ENCODE measurements at regions of chr15 and their contacts with region 1.

Region 1: DNA sequence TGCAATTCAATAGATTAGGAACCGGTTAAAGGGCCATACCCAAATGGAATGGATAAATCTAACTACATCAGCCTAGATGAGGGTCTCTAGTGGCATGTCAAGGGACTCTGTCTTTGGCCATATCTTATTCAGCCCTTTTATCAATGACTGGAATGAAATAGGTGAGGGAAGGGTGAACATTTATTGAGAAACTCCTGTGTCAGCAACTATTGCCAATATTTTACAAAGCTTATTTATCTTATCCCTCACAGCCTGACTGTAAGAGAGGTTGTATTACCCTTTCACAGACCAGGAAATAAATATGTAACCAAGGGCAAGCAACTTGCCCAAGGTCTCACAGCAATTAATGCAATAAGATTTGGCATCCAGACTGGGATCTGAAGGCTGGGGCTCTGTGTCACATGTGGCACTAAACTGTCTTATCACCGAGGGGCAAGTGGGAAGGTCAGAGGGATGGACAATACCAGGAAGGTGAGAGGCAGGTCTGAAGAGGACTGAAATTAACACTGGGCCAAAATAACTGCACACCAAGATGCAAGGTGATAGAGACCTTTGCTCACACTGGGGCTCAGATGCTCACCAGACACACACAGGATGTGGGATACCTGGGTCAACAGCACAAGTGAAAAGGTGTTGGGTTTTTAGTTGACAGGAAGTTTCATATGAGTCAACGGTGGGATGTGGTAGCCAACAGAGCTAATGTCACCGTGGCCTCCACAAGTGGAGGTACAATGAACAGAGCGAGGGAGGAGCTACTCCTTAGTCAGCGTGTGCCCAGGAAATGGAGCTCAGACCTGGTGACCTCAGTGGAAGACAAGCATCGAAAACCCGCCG is 261.3 kb downstream of the RPLP1 start:
- DNase-seq: peak in 8 of 9 donors; percentile 60 to 80 (median 70)
- ATAC-seq: peak; percentile 88
- H3K4me3 ChIP-seq: no peak overlapping the region
- H3K4me3 Mint-ChIP-seq: peak overlapping the region; percentile 52 to 80 (median 72)
- H3K27ac ChIP-seq: no peak overlapping the region
- H3K27ac Mint-ChIP-seq: peak overlapping the region; percentile 71 to 90 (median 78)
- H3K4me1 ChIP-seq: peaks cover 32 to 50% of the 10 kb centered on the region in 2 donors
- H3K4me1 Mint-ChIP-seq: peaks cover 31 to 63% (median 54%) of the 10 kb centered on the region in 7 donors
- H3K27me3 ChIP-seq: no peaks in the 10 kb centered on the region
- H3K27me3 Mint-ChIP-seq: peaks cover 0 to 22% (median 0%) of the 10 kb centered on the region in 5 donors

Region 2: DNA sequence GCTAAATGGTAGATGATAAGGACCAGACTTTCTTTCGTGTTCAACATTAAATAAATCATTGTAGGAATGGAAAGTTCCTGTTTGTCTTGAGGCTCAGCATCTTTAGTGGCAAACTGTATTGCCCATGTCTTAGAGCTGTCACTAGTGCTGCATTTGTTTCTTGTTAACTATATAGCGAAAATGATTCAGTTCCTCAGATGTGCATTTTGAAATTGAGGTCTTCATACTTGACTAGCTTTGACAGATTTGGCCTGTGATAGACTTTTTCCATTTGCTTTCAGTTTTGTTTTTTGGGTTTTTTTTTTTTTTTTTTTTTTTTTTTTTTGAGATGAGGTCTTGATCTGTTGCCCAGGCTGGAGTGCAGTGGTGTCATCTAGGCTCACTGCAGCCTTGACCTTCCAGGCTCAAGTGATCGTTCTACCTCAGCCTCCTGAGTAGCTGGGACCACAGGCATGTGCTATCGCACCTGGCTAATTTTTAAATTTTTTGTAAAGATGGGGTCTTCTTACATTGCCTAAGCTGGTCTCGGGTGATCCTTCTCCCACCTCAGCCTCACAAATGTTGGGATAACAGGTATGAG is 270.8 kb before region 1 on chr15:
- CTCF ChIA-PET with region 1: no interaction called
- POLR2A ChIA-PET with region 1: no interaction called
- intact Hi-C with region 1: no loop called
- DNase-seq: no peak
- ATAC-seq: peak; percentile 20
- H3K4me3 ChIP-seq: no peak overlapping the region
- H3K4me3 Mint-ChIP-seq: peak overlapping the region in 1 of 10 donors; percentile 71
- H3K27ac ChIP-seq: no peak overlapping the region
- H3K27ac Mint-ChIP-seq: peak overlapping the region in 2 of 9 donors; percentile 43 to 82
- H3K4me1 ChIP-seq: no peaks in the 10 kb centered on the region
- H3K4me1 Mint-ChIP-seq: peaks cover 0 to 19% (median 0%) of the 10 kb centered on the region in 7 donors
- H3K27me3 ChIP-seq: no peaks in the 10 kb centered on the region
- H3K27me3 Mint-ChIP-seq: no peaks in the 10 kb centered on the region

Region 3: GRCh38 chr15:69668963-69669362 is 45.0 kb before region 1 on chr15:
- CTCF ChIA-PET with region 1: no interaction called
- POLR2A ChIA-PET with region 1: no interaction called
- intact Hi-C with region 1: loop called in 1 of 2 experiments (anchors 2 kb)
- DNase-seq: no peak
- ATAC-seq: peak; percentile 59
- H3K4me3 ChIP-seq: no peak overlapping the region
- H3K4me3 Mint-ChIP-seq: peak overlapping the region in 1 of 10 donors; percentile 48
- H3K27ac ChIP-seq: no peak overlapping the region
- H3K27ac Mint-ChIP-seq: peak overlapping the region in 3 of 9 donors; percentile 40 to 63 (median 59)
- H3K4me1 ChIP-seq: peaks cover 20 to 50% of the 10 kb centered on the region in 2 donors
- H3K4me1 Mint-ChIP-seq: peaks cover 14 to 38% (median 34%) of the 10 kb centered on the region in 7 donors
- H3K27me3 ChIP-seq: no peaks in the 10 kb centered on the region
- H3K27me3 Mint-ChIP-seq: peaks cover 0 to 8% (median 0%) of the 10 kb centered on the region in 5 donors

Region 4: GRCh38 chr15:69679623-69680228 is 34.2 kb before region 1 on chr15:
- CTCF ChIA-PET with region 1: no interaction called
- POLR2A ChIA-PET with region 1: no interaction called
- intact Hi-C with region 1: loop called in 1 of 2 experiments (anchors 5 kb)
- DNase-seq: peak in 1 of 9 donors; percentile 51
- ATAC-seq: peak; percentile 38
- H3K4me3 ChIP-seq: peak overlapping the region; percentile 23
- H3K4me3 Mint-ChIP-seq: peak overlapping the region in 1 of 10 donors; percentile 34
- H3K27ac ChIP-seq: no peak overlapping the region
- H3K27ac Mint-ChIP-seq: no peak overlapping the region
- H3K4me1 ChIP-seq: peaks cover 0 to 11% of the 10 kb centered on the region in 2 donors
- H3K4me1 Mint-ChIP-seq: peaks cover 0 to 24% (median 3%) of the 10 kb centered on the region in 7 donors
- H3K27me3 ChIP-seq: no peaks in the 10 kb centered on the region
- H3K27me3 Mint-ChIP-seq: peaks cover 0 to 20% (median 5%) of the 10 kb centered on the region in 5 donors

Region 5: DNA sequence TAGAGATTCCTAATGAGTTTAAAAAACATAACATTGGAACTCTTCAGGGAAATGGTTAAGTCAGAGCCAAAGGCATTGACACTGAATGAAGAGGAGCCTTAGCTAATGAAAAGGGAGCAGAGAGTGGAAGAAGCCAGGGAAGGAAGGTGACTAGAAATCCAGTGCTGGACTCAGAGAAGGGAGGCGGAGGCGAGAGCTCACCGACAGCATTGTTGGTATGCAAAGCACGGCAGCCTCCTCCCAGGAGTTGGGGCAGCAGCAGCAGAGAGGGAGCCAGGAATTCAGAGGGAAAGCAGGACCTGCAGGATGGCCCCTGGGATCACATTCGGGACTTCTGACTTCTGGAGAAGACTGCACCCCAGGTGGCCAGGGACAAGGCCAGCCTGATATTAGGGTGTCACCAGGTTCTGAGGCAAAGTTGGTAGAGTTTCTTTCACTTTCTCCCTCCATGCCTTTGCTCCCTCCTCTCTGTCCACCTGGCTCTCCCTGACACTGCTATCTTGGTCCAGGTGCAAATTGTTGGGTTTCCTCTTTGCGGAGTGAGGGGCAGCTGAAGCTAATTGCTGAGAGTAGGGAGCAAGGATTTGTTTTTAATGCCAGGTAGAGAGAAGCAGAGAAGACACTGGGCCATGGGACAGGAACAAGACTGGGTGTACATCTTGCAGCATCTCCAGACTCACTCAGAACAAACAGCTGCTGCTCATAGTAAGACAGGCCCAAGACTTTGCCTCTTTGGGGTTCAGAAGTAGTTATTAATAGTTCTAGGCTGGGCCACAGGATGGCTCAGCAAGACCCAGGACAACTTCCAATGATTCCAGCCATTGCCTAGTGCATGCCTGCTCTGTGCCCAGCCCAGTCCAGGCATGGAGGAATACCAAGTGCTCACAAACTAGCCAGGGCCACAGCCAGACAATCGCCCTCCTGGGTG is 225.8 kb after region 1 on chr15:
- CTCF ChIA-PET with region 1: no interaction called
- POLR2A ChIA-PET with region 1: no interaction called
- intact Hi-C with region 1: no loop called
- DNase-seq: no peak
- ATAC-seq: no peak
- H3K4me3 ChIP-seq: no peak overlapping the region
- H3K4me3 Mint-ChIP-seq: no peak overlapping the region
- H3K27ac ChIP-seq: no peak overlapping the region
- H3K27ac Mint-ChIP-seq: no peak overlapping the region
- H3K4me1 ChIP-seq: no peaks in the 10 kb centered on the region
- H3K4me1 Mint-ChIP-seq: peaks cover 0 to 4% (median 0%) of the 10 kb centered on the region in 7 donors
- H3K27me3 ChIP-seq: peaks cover 0 to 6% of the 10 kb centered on the region in 2 donors
- H3K27me3 Mint-ChIP-seq: peaks cover 0 to 41% (median 0%) of the 10 kb centered on the region in 5 donors

Region 6: DNA sequence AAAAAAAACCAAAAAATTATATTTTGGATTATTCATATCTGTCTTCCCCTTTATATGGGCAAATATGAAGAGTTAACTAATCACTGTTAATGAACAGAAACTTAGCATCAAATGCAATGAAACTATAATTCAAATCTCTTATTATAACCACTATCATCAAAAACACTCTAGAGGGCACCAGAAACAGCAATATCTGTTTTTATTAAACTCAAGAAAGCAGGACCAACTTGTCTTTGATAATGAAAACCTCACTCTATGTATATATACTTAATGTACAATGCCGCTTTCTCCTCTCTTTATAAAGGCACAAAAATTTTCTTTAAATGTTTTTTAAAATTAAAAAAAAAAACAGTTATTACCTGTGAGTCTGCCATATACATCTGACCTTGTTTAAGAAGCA is 956.7 kb after region 1 on chr15:
- CTCF ChIA-PET with region 1: no interaction called
- POLR2A ChIA-PET with region 1: no interaction called
- intact Hi-C with region 1: loop called in 1 of 2 experiments (anchors 5 kb)
- DNase-seq: peak in 4 of 9 donors; percentile 13 to 24 (median 20)
- ATAC-seq: no peak
- H3K4me3 ChIP-seq: no peak overlapping the region
- H3K4me3 Mint-ChIP-seq: no peak overlapping the region
- H3K27ac ChIP-seq: no peak overlapping the region
- H3K27ac Mint-ChIP-seq: no peak overlapping the region
- H3K4me1 ChIP-seq: peaks cover 12 to 19% of the 10 kb centered on the region in 2 donors
- H3K4me1 Mint-ChIP-seq: peaks cover 13 to 32% (median 24%) of the 10 kb centered on the region in 7 donors
- H3K27me3 ChIP-seq: no peaks in the 10 kb centered on the region
- H3K27me3 Mint-ChIP-seq: peaks cover 0 to 29% (median 4%) of the 10 kb centered on the region in 5 donors

Measured in naive thymus-derived CD4-positive, alpha-beta T cell (primary cell).